Esophagus squamous epithelium (tissue), 5 donors: ENCODE measurements at regions of chr20 and their contacts with region 1.

Region 1: DNA sequence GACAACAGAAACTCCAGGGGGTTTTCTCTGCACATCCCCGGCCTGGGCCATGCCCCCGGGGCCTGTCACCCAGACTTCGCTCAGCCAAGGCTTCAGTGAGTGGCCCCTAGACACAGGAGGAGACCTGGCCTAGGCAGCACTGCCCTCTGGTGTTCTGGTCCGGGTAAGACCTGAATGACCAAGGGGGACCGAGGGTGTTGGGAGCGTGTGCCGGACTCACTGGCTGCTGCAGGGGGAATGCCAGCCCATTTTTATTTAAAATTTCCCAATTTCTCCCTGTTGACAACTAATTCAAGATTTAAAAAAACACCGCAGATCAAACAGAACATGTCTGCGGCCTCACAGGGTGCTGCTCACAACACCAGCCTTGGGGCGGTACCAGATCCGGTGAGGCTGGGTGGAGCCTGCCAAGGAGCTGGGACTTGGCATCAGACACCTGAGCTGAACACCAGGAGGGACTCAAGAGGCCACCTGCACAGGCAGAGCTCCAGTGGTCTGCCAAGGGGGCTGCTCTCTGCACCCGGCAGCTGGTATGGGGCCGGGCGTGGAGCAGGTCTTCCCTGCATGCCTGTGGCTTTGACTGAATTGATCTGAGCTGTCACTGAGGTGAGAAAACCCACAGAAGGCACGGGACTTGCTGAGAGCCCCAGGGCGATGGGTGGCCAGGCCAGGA is 47.8 kb downstream of the DSTN start:
- DNase-seq: no peak
- H3K4me3 ChIP-seq: no peak overlapping the region
- H3K27ac ChIP-seq: no peak overlapping the region
- H3K4me1 ChIP-seq: peaks cover 10 to 44% (median 19%) of the 10 kb centered on the region in 3 donors
- H3K27me3 ChIP-seq: no peaks in the 10 kb centered on the region
- CTCF ChIP-seq: peak; percentile 13 to 80 (median 74)
- POLR2A ChIP-seq: no peak

Region 2: DNA sequence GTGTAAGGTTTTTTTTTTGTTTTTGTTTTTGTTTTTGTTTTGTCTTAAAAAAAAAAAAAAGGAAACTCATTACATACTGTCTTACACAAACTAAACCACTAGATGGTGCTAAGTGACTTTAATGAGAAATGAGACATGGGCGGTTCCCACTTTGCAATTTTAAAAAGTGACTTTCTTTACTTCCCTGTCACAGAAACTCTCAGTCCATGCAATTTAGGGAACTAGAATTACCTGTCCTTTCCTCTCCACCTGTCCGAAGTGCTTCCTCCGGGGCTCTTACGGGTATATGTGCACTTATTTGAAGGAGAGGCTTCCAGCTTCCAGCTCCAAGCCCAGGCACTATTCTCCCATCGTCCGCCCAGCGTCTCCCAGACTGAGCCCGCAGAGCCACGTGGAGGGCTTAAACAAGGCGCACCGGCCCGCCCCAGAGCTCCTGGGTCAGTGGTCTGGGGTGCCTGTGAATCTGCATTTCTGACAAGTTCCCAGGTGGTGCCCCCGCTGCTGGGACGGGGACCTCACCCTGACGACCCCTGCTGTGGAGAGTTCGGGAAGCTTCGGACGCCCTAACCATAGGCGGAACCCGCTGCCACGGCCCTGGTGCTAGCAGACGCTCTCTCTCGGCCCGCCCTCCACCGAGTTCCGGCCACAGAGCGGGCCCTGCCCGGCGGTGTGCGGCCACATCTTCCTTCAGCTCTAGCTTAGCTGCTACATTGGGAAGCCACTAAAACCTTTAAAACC is 112.6 kb before region 1 on chr20:
- intact Hi-C with region 1: loop called (anchors 10 kb)
- DNase-seq: no peak
- H3K4me3 ChIP-seq: peak overlapping the region; percentile 17 to 67 (median 52)
- H3K27ac ChIP-seq: peak overlapping the region; percentile 18 to 82 (median 52)
- H3K4me1 ChIP-seq: peaks cover 11 to 27% (median 14%) of the 10 kb centered on the region in 3 donors
- H3K27me3 ChIP-seq: no peaks in the 10 kb centered on the region
- CTCF ChIP-seq: peak; percentile 33 to 76 (median 60)
- POLR2A ChIP-seq: no peak

Region 3: DNA sequence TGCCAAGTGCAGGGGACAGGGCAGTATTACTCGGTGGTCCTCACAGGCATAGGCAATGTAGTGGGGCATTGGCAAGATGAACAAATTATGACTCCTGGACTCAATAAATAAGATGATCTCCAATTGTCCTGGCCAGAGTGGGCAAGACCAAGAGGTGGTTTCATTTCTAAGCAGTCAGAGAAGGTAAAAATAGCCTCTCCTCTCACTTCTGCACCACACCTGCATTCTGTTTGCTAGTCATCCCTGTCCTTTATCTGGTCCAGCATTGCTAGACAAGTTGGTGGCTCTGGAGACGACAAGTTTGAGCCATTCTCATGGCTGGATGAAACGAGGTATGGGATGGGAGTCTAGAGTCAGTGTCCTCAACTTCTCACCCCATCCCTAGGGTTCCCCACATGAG is 165.1 kb after region 1 on chr20:
- intact Hi-C with region 1: no loop called
- DNase-seq: no peak
- H3K4me3 ChIP-seq: no peak overlapping the region
- H3K27ac ChIP-seq: no peak overlapping the region
- H3K4me1 ChIP-seq: peaks cover 0 to 5% (median 0%) of the 10 kb centered on the region in 3 donors
- H3K27me3 ChIP-seq: no peaks in the 10 kb centered on the region
- CTCF ChIP-seq: no peak
- POLR2A ChIP-seq: no peak